H1 (cell line): ENCODE measurements at regions of chr19 and their contacts with region 1.

Region 1: GRCh38 chr19:51016798-51017683 is 2.5 kb downstream of the KLK10 start:
- DNase-seq: peak; percentile 75 to 98
- H3K4me3 ChIP-seq: peak overlapping the region; percentile 53 to 73 (median 62)
- H3K27ac ChIP-seq: no peak overlapping the region
- H3K4me1 ChIP-seq: peaks cover 0 to 7% (median 2%) of the 10 kb centered on the region in 4 experiments; a peak in 4 of 7 replicates
- H3K27me3 ChIP-seq: peaks cover 0 to 30% (median 19%) of the 10 kb centered on the region in 4 experiments; a peak in 5 of 7 replicates
- CTCF ChIP-seq: peak; percentile 89 to 95 (median 92)
- EP300 ChIP-seq: no peak
- POLR2A ChIP-seq: 0 out of 3 replicates have a peak, but pooled peaks of 1 of the 2 experiments have one; percentile 21
- RAD21 ChIP-seq: peak; percentile 82 to 88

Region 2: GRCh38 chr19:50909240-50910070 is 107.6 kb before region 1 on chr19:
- CTCF ChIA-PET with region 1: interaction called, 16 read pairs
- POLR2A ChIA-PET with region 1: interaction called, 3 read pairs
- DNase-seq: peak; percentile 95 to 100
- H3K4me3 ChIP-seq: peak overlapping the region; percentile 38 to 68 (median 54)
- H3K27ac ChIP-seq: no peak overlapping the region
- H3K4me1 ChIP-seq: peaks cover 0 to 14% (median 9%) of the 10 kb centered on the region in 4 experiments; a peak in 5 of 7 replicates
- H3K27me3 ChIP-seq: peaks cover 20 to 40% (median 32%) of the 10 kb centered on the region in 4 experiments
- CTCF ChIP-seq: no peak
- EP300 ChIP-seq: no peak
- POLR2A ChIP-seq: no peak
- RAD21 ChIP-seq: no peak

Region 3: DNA sequence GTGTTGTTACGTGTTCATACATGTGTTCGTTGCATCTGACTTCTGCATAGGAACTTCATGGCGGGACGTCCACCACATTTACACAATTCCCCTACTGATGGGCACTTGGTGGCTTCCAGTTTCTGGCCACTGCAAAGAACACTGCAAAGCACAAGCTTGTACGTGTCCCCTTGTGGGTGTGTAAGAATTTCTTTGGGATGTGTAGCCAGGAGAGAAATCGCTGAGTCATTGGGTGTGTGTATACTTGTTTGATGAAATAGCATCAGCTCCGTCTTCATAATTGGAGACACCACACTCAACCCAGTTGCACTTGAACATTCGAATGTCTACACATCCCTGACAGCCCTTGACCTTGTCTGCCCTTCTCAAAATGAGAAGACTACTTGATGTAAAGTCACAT is 83.4 kb before region 1 on chr19:
- CTCF ChIA-PET with region 1: interaction called, 36 read pairs
- POLR2A ChIA-PET with region 1: interaction called, 3 read pairs
- DNase-seq: no peak
- H3K4me3 ChIP-seq: no peak overlapping the region
- H3K27ac ChIP-seq: no peak overlapping the region
- H3K4me1 ChIP-seq: no peaks in the 10 kb centered on the region
- H3K27me3 ChIP-seq: 0 out of 7 replicates have a peak, but pooled peaks cover 0 to 2% (median 0%) of the 10 kb centered on the region in 4 experiments
- CTCF ChIP-seq: no peak
- EP300 ChIP-seq: no peak
- POLR2A ChIP-seq: no peak
- RAD21 ChIP-seq: no peak

Region 4: DNA sequence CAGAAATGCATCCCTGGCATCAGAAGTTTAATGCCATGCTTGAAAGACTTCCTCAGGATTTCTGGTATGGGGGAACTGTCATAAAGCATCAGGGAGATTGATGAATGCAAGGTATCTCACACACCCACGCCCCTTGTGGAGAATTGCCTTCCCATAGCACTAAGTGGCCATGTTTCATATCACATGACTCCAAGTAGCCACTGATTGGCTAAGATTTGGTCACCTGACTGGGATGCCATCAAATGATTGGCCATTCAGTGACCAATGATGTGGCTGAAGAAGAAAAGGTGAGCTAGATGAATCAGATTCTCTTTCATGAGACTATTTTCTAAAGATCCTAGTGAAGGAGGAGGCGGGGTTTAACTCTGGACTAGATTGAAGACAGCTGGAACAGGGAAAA is 22.9 kb before region 1 on chr19:
- CTCF ChIA-PET with region 1: interaction called, 19 read pairs
- POLR2A ChIA-PET with region 1: interaction called, 4 read pairs
- DNase-seq: no peak
- H3K4me3 ChIP-seq: no peak overlapping the region
- H3K27ac ChIP-seq: no peak overlapping the region
- H3K4me1 ChIP-seq: peaks cover 0 to 2% (median 0%) of the 10 kb centered on the region in 4 experiments; a peak in 1 of 7 replicates
- H3K27me3 ChIP-seq: no peaks in the 10 kb centered on the region
- CTCF ChIP-seq: no peak
- EP300 ChIP-seq: no peak
- POLR2A ChIP-seq: no peak
- RAD21 ChIP-seq: no peak

Region 5: GRCh38 chr19:51047031-51047335 is 29.9 kb after region 1 on chr19:
- CTCF ChIA-PET with region 1: interaction called, 54 read pairs
- POLR2A ChIA-PET with region 1: interaction called, 5 read pairs
- DNase-seq: no peak
- H3K4me3 ChIP-seq: peak overlapping the region in 2 of 4 experiments; percentile 12 to 38; a peak in 2 of 8 replicates
- H3K27ac ChIP-seq: peak overlapping the region; percentile 5; the same call in 1 of the 2 replicates
- H3K4me1 ChIP-seq: peaks cover 0 to 15% (median 7%) of the 10 kb centered on the region in 4 experiments; a peak in 4 of 7 replicates
- H3K27me3 ChIP-seq: no peaks in the 10 kb centered on the region
- CTCF ChIP-seq: no peak
- EP300 ChIP-seq: no peak
- POLR2A ChIP-seq: peak in 1 of 2 experiments; percentile 39; a peak in 1 of 3 replicates
- RAD21 ChIP-seq: no peak

Region 6: DNA sequence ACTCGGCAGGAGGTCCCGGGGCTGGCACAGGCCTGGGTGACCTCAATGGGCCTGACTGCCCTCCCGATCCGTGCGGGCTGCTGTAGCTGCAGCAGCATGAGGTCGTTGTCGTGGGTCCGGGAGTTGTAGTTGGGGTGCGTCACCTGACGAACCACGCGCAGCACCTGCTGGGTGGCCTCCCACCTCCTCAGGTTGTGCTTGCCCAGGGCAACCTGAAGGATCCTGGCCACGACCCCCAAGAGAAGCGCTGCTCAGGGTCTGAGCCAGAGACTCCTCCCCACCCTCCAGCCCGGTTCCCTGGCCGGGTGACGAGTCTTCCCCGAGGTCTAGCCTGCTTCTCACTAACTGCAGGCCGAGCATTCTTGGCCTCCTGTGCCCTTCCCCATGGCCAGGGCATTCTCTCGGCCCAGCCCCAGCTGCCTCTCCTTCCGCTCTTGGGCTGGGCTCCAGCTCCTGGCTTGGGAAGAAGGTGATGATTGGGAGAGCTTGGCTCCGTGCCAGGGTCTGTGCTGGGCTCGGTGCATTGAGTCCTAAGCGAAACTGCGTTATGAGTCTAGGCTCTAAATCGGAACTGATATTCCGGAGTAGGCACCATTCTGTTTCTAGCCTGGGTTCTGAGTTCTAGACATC is 62.6 kb after region 1 on chr19:
- CTCF ChIA-PET with region 1: interaction called, 11 read pairs
- POLR2A ChIA-PET with region 1: no interaction called
- DNase-seq: no peak
- H3K4me3 ChIP-seq: no peak overlapping the region
- H3K27ac ChIP-seq: no peak overlapping the region
- H3K4me1 ChIP-seq: peaks cover 2 to 6% (median 3%) of the 10 kb centered on the region in 4 experiments; a peak in 4 of 7 replicates
- H3K27me3 ChIP-seq: no peaks in the 10 kb centered on the region
- CTCF ChIP-seq: no peak
- EP300 ChIP-seq: no peak
- POLR2A ChIP-seq: no peak
- RAD21 ChIP-seq: no peak

Region 7: GRCh38 chr19:51097166-51097738 is 80.2 kb after region 1 on chr19:
- CTCF ChIA-PET with region 1: interaction called, 269 read pairs
- POLR2A ChIA-PET with region 1: interaction called, 5 read pairs
- DNase-seq: peak in 1 of 2 experiments; percentile 89
- H3K4me3 ChIP-seq: no peak overlapping the region
- H3K27ac ChIP-seq: no peak overlapping the region
- H3K4me1 ChIP-seq: peaks cover 0 to 6% (median 2%) of the 10 kb centered on the region in 4 experiments; a peak in 4 of 7 replicates
- H3K27me3 ChIP-seq: no peaks in the 10 kb centered on the region; a peak in 1 of 7 replicates
- CTCF ChIP-seq: peak; percentile 69 to 74 (median 70)
- EP300 ChIP-seq: no peak
- POLR2A ChIP-seq: no peak
- RAD21 ChIP-seq: peak; percentile 55 to 66